ENCODE measurements at regions of chr18 and their contacts with region 1.

Region 1: DNA sequence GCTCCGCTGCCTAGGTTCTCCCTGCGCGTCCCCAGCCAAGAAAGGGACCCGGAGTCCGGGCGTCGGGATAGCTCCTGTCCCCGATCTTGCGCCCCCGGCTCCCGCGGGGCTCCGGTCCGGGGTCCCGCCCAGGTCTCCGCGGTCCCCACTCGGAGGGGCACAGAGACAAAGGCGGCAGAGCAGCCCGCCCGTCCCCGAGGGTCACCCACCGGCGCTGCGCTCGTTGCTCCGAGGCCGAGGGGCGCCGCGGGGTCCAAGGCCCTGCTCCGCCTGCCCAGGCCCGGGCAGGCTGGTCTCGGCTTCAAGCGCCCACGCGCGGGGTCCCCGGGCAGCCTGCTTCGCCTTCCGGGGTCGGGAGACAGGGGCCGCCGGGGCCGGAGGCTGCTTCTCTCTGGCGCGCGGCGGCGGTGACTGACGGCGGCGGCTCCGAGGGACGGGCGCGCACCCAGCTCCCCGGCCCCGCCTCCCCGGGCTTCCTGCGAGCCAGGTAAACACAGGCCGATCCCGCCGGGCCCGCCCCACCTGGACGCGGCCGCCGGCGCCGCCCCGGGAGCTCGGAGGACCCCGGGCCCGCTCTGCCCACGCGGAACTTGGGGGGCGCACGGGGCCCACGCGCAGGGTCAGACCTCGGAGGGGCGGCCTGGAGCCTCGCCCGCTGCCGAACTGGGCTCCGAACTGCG is at the start of gene MBP:
- DNase-seq: peak in 1 of 2 experiments; percentile 45
- ATAC-seq: peak; percentile 61 to 69
- H3K4me3 ChIP-seq: peak within 1 kb of the TSS; percentile 62
- H3K27ac ChIP-seq: peak within 1 kb of the TSS; percentile 80 to 98
- H3K4me1 ChIP-seq: peaks cover 28% of the 10 kb centered on the region
- CTCF ChIP-seq: no peak
- EP300 ChIP-seq: no peak
- POLR2A ChIP-seq: no peak; the same call in 1 of the 2 replicates
- RAD21 ChIP-seq: no peak
- polyA plus RNA-seq, gene MBP: 28.6 and 33.1 TPM in 2 replicates

Region 2: GRCh38 chr18:77101410-77102258 is 30.9 kb before region 1 on chr18:
- CTCF ChIA-PET with region 1: no interaction called
- POLR2A ChIA-PET with region 1: interaction called, 13 read pairs
- DNase-seq: peak; percentile 86 to 90
- ATAC-seq: peak; percentile 94 to 95
- H3K4me3 ChIP-seq: peak overlapping the region; percentile 19
- H3K27ac ChIP-seq: peak overlapping the region; percentile 96 to 97
- H3K4me1 ChIP-seq: peaks cover 57% of the 10 kb centered on the region
- CTCF ChIP-seq: no peak
- EP300 ChIP-seq: no peak; a peak in 1 of 5 replicates
- POLR2A ChIP-seq: no peak
- RAD21 ChIP-seq: peak; percentile 9 to 33; a peak in 2 of 5 replicates

Region 3: GRCh38 chr18:77147418-77147852 is 14.9 kb after region 1 on chr18:
- CTCF ChIA-PET with region 1: no interaction called
- POLR2A ChIA-PET with region 1: no interaction called
- DNase-seq: no peak
- ATAC-seq: no peak
- H3K4me3 ChIP-seq: no peak overlapping the region
- H3K27ac ChIP-seq: no peak overlapping the region
- H3K4me1 ChIP-seq: no peaks in the 10 kb centered on the region
- CTCF ChIP-seq: no peak
- EP300 ChIP-seq: no peak
- POLR2A ChIP-seq: no peak
- RAD21 ChIP-seq: no peak

Region 4: DNA sequence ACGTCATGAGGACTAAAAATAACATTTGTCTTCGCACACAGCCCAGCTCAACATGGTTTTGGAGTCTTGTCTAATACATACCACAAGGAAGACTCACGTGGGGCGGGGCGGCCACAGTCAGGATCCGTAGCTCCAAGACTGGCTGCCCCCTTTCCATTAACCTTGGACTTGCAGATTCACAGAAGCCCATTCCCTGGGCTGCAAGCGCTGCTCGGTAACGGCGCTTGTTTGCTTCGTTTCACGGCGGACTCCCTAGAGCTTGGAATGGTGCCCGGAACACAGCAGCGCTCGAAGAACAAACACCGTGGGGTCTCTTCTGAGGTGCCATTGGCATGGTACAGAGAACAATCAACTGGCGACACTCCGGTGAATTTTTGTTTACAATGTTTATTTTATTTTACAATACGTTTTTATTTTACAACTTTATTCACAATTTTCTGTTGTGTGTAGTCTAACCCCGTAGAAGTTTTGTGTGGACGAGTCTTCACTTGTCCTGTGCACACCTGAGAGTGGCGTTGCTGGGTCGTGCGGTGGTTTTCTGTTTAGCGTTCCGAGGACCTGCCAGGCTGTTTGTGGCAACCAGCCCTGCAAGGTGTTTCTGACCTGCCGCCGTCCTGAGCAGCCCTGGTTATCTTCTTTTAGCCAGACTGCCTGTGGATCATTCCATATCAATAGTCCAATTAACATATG is 243.7 kb after region 1 on chr18:
- CTCF ChIA-PET with region 1: no interaction called
- POLR2A ChIA-PET with region 1: no interaction called
- DNase-seq: no peak
- ATAC-seq: no peak
- H3K4me3 ChIP-seq: no peak overlapping the region
- H3K27ac ChIP-seq: no peak overlapping the region
- H3K4me1 ChIP-seq: no peaks in the 10 kb centered on the region
- CTCF ChIP-seq: no peak
- EP300 ChIP-seq: no peak
- POLR2A ChIP-seq: no peak
- RAD21 ChIP-seq: no peak